ENCODE measurements at regions of chr18 and their contacts with region 1.

Region 1: GRCh38 chr18:73189726-73190125 is 321.9 kb upstream of the NETO1 start:
- DNase-seq: no peak
- H3K4me3 ChIP-seq: no peak overlapping the region
- CTCF ChIP-seq: no peak

Region 2: DNA sequence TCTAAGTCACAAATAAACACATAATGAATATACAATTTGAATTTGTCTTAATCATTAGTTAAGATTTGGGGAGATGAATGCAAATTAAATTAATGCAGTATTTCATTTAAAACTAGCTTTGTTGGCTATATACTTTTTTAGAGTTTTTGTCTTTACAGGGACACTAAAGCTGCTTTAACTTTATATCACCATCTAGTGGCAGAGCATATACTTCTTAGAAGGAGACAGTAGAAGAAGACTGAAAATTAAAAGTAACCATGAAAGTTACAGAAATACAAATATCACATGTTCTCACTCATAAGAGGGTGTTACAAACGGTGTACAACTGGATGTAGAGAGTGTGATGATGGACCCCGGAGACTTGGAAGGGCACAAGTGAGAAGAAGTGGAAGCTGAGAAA is 53.6 kb before region 1 on chr18:
- in situ Hi-C with region 1: no loop called
- DNase-seq: no peak
- H3K4me3 ChIP-seq: no peak overlapping the region
- CTCF ChIP-seq: peak; percentile 18

Region 3: GRCh38 chr18:73220663-73221062 is 30.9 kb after region 1 on chr18:
- in situ Hi-C with region 1: loop called (anchors 5 kb)
- DNase-seq: no peak
- H3K4me3 ChIP-seq: no peak overlapping the region
- CTCF ChIP-seq: no peak